Ascending aorta (tissue), 2 donors: ENCODE measurements at regions of chr20 and their contacts with region 1.

Region 1: GRCh38 chr20:33666293-33667244 is at the start of gene ACTL10:
- DNase-seq: peak; percentile 95 to 99
- H3K4me3 ChIP-seq: peak within 1 kb of the TSS; percentile 65 to 70
- H3K27ac ChIP-seq: peak within 1 kb of the TSS; percentile 88 to 93
- H3K4me1 ChIP-seq: peaks cover 9 to 40% of the 10 kb centered on the region in 2 donors
- H3K27me3 ChIP-seq: no peaks in the 10 kb centered on the region
- CTCF ChIP-seq: peak in 2 of 3 experiments; percentile 43 to 44
- total RNA-seq, gene ACTL10: 26.3 TPM

Region 2: GRCh38 chr20:33459599-33459998 is 207.0 kb before region 1 on chr20:
- intact Hi-C with region 1: loop called (anchors 5 kb)
- DNase-seq: no peak
- H3K4me3 ChIP-seq: no peak overlapping the region
- H3K27ac ChIP-seq: no peak overlapping the region
- H3K4me1 ChIP-seq: peaks cover 0 to 13% of the 10 kb centered on the region in 2 donors
- H3K27me3 ChIP-seq: no peaks in the 10 kb centered on the region
- CTCF ChIP-seq: no peak

Region 3: DNA sequence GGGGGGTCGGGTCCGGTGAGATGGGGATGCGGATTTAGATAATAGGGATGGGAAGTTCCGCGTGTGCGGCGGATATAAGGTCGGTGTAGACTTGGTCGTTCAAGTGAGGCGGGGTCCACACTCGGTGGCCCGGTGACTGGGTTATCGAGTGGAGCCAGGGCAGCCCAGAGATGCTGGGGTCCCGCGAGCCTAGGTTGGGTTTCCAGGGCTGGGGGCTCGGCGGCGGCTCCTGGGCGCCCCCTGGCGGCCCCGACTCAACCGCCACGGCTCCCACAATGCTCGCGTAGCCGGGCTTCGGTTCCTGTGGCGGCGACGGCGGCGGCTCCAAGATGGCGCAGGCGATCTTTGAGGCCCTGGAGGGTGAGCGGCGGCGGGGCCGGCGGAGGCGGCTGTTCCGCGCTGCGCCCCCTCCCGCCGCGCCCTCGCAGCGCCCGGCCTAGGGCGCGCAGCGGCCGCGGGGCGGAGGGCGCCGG is 65.2 kb after region 1 on chr20 and contains the start of gene ZNF341:
- intact Hi-C with region 1: loop called (anchors 2 kb)
- DNase-seq: peak; percentile 29 to 92
- H3K4me3 ChIP-seq: peak within 1 kb of the TSS; percentile 73 to 81
- H3K27ac ChIP-seq: peak within 1 kb of the TSS; percentile 74 to 84
- H3K4me1 ChIP-seq: peaks cover 0 to 9% of the 10 kb centered on the region in 2 donors
- H3K27me3 ChIP-seq: no peaks in the 10 kb centered on the region
- CTCF ChIP-seq: peak; percentile 91
- total RNA-seq, gene ZNF341: 4.5 TPM